ENCODE measurements at regions of chr4 and their contacts with region 1.

Region 1: DNA sequence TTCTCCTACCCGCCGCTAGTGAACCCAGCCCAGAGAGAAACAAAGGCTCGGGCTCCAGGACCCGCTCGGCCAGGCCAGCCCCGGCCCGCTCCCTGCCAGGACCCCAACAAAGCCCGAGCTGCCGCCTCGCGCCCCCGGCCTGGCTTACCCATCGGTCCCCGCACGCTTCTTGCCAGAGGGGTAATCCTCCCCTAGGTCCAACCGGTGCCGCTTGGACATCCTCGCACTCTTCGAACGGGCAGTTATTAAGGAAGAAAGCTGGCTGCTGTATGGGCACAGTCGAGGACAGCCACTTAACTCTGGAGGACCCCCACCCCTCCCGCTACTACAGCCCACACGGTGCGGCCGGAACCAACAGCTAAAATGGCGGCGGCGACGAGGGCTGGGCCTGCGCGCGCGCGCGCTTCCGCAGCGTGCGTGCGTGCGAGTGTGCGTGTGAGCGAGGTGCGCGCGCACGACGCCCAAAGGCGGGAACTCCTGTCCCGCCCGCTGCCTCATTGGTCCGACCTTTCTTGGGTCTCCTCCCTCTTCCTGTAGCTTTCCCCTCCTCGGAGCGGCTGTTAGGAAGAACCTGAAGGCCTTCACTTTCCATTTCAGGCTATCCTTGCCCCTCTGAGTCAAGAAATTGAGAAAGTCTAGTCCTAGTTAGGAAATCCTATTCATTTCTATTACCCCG is at the start of gene DHX15:
- DNase-seq: peak; percentile 97
- H3K4me3 Mint-ChIP-seq: peak within 1 kb of the TSS; percentile 95
- H3K27ac Mint-ChIP-seq: peak within 1 kb of the TSS; percentile 97
- H3K4me1 Mint-ChIP-seq: peaks cover 30% of the 10 kb centered on the region
- H3K27me3 Mint-ChIP-seq: no peaks in the 10 kb centered on the region
- total RNA-seq, gene DHX15: 263 and 265 TPM in 2 replicates

Region 2: GRCh38 chr4:23966725-23967124 is 617.6 kb before region 1 on chr4:
- intact Hi-C with region 1: no loop called
- DNase-seq: no peak
- H3K4me3 Mint-ChIP-seq: no peak overlapping the region
- H3K27ac Mint-ChIP-seq: no peak overlapping the region
- H3K4me1 Mint-ChIP-seq: no peaks in the 10 kb centered on the region
- H3K27me3 Mint-ChIP-seq: no peaks in the 10 kb centered on the region

Region 3: GRCh38 chr4:24519649-24520048 is 64.7 kb before region 1 on chr4:
- intact Hi-C with region 1: loop called (anchors 5 kb)
- DNase-seq: no peak
- H3K4me3 Mint-ChIP-seq: no peak overlapping the region
- H3K27ac Mint-ChIP-seq: no peak overlapping the region
- H3K4me1 Mint-ChIP-seq: peaks cover 12% of the 10 kb centered on the region
- H3K27me3 Mint-ChIP-seq: no peaks in the 10 kb centered on the region

Region 4: GRCh38 chr4:24570574-24571236 is 13.6 kb before region 1 on chr4:
- intact Hi-C with region 1: loop called (anchors 2 kb)
- DNase-seq: no peak
- H3K4me3 Mint-ChIP-seq: no peak overlapping the region
- H3K27ac Mint-ChIP-seq: peak overlapping the region; percentile 27
- H3K4me1 Mint-ChIP-seq: peaks cover 49% of the 10 kb centered on the region
- H3K27me3 Mint-ChIP-seq: no peaks in the 10 kb centered on the region

Region 5: GRCh38 chr4:25312496-25313200 is 728.3 kb after region 1 on chr4 and contains the start of gene ZCCHC4:
- intact Hi-C with region 1: loop called (anchors 1 kb)
- DNase-seq: peak; percentile 97
- H3K4me3 Mint-ChIP-seq: peak within 1 kb of the TSS; percentile 100
- H3K27ac Mint-ChIP-seq: peak within 1 kb of the TSS; percentile 97
- H3K4me1 Mint-ChIP-seq: peaks cover 11% of the 10 kb centered on the region
- H3K27me3 Mint-ChIP-seq: no peaks in the 10 kb centered on the region
- total RNA-seq, gene ZCCHC4: 15.5 and 15.6 TPM in 2 replicates

Measured in activated CD4-positive, alpha-beta T cell treated with anti-CD3 and anti-CD28 coated beads, Interleukin-2, amount 10 ng/mL, durations not matched to agents 24 days and 14 days (primary cell).